ENCODE measurements at regions of chr10 and their contacts with region 1.

Region 1: DNA sequence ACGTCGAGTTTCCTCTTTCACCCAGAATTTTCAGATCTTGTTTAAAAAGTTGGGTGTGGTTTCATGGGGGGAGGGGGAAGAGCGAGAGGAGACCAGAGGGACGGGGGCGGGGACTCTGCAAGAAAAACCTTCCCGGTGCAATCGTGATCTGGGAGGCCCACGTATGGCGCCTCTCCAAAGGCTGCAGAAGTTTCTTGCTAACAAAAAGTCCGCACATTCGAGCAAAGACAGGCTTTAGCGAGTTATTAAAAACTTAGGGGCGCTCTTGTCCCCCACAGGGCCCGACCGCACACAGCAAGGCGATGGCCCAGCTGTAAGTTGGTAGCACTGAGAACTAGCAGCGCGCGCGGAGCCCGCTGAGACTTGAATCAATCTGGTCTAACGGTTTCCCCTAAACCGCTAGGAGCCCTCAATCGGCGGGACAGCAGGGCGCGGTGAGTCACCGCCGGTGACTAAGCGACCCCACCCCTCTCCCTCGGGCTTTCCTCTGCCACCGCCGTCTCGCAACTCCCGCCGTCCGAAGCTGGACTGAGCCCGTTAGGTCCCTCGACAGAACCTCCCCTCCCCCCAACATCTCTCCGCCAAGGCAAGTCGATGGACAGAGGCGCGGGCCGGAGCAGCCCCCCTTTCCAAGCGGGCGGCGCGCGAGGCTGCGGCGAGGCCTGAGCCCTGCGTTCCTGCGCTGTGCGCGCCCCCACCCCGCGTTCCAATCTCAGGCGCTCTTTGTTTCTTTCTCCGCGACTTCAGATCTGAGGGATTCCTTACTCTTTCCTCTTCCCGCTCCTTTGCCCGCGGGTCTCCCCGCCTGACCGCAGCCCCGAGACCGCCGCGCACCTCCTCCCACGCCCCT is at the start of gene VIM:
- DNase-seq: peak; percentile 95
- ATAC-seq: peak; percentile 46
- H3K4me3 Mint-ChIP-seq: peak within 1 kb of the TSS; percentile 94
- H3K27ac Mint-ChIP-seq: peak within 1 kb of the TSS; percentile 91
- H3K4me1 Mint-ChIP-seq: peaks cover 40% of the 10 kb centered on the region
- H3K27me3 Mint-ChIP-seq: no peaks in the 10 kb centered on the region
- CTCF ChIP-seq: no peak
- total RNA-seq, gene VIM: 590 to 602 TPM

Region 2: GRCh38 chr10:16891375-16892313 is 336.7 kb before region 1 on chr10:
- CTCF ChIA-PET with region 1: no interaction called
- POLR2A ChIA-PET with region 1: interaction called, 23 read pairs
- intact Hi-C with region 1: no loop called
- DNase-seq: peak; percentile 70
- ATAC-seq: peak; percentile 89
- H3K4me3 Mint-ChIP-seq: peak overlapping the region; percentile 54
- H3K27ac Mint-ChIP-seq: peak overlapping the region; percentile 48
- H3K4me1 Mint-ChIP-seq: peaks cover 10% of the 10 kb centered on the region
- H3K27me3 Mint-ChIP-seq: no peaks in the 10 kb centered on the region
- CTCF ChIP-seq: peak; percentile 36

Region 3: GRCh38 chr10:17023386-17024298 is 204.7 kb before region 1 on chr10:
- CTCF ChIA-PET with region 1: interaction called, 3 read pairs
- POLR2A ChIA-PET with region 1: interaction called, 41 read pairs
- intact Hi-C with region 1: loop called (anchors 1 kb)
- DNase-seq: peak; percentile 94
- ATAC-seq: peak; percentile 60
- H3K4me3 Mint-ChIP-seq: peak overlapping the region; percentile 50
- H3K27ac Mint-ChIP-seq: peak overlapping the region; percentile 97
- H3K4me1 Mint-ChIP-seq: peaks cover 62% of the 10 kb centered on the region
- H3K27me3 Mint-ChIP-seq: no peaks in the 10 kb centered on the region
- CTCF ChIP-seq: no peak

Region 4: DNA sequence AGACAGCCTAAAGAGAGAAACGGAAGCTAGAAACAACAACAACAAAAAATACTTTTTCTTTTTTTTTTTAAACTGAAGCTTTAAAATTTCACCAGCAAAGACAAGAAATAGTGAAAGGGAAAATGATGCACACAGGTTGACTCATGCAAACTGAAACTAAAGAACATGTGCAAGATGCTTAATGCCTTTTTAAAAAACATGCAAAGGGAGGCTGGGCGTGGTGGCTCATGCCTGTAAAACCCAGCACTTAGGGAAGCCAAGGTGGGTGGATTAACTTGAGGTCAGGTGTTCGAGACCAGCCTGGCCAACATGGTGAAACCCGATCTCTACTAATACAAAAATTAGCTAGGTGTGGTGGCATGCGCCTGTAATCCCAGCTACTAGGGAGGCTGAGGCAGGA is 83.6 kb before region 1 on chr10:
- CTCF ChIA-PET with region 1: interaction called, 10 read pairs
- POLR2A ChIA-PET with region 1: interaction called, 6 read pairs
- intact Hi-C with region 1: no loop called
- DNase-seq: peak; percentile 84
- ATAC-seq: peak; percentile 90
- H3K4me3 Mint-ChIP-seq: no peak overlapping the region
- H3K27ac Mint-ChIP-seq: peak overlapping the region; percentile 62
- H3K4me1 Mint-ChIP-seq: peaks cover 26% of the 10 kb centered on the region
- H3K27me3 Mint-ChIP-seq: no peaks in the 10 kb centered on the region
- CTCF ChIP-seq: no peak

Region 5: GRCh38 chr10:17206210-17206709 is 22.1 kb before region 1 on chr10:
- CTCF ChIA-PET with region 1: interaction called, 35 read pairs
- POLR2A ChIA-PET with region 1: interaction called, 35 read pairs
- intact Hi-C with region 1: loop called (anchors 1 kb)
- DNase-seq: peak; percentile 63
- ATAC-seq: peak; percentile 83
- H3K4me3 Mint-ChIP-seq: no peak overlapping the region
- H3K27ac Mint-ChIP-seq: peak overlapping the region; percentile 80
- H3K4me1 Mint-ChIP-seq: peaks cover 41% of the 10 kb centered on the region
- H3K27me3 Mint-ChIP-seq: no peaks in the 10 kb centered on the region
- CTCF ChIP-seq: no peak

Region 6: GRCh38 chr10:17643755-17644484 is 415.6 kb after region 1 on chr10 and contains the start of gene STAM:
- CTCF ChIA-PET with region 1: no interaction called
- POLR2A ChIA-PET with region 1: interaction called, 4 read pairs
- intact Hi-C with region 1: loop called (anchors 10 kb)
- DNase-seq: peak; percentile 96
- ATAC-seq: peak; percentile 79
- H3K4me3 Mint-ChIP-seq: peak within 1 kb of the TSS; percentile 90
- H3K27ac Mint-ChIP-seq: peak within 1 kb of the TSS; percentile 100
- H3K4me1 Mint-ChIP-seq: peaks cover 55% of the 10 kb centered on the region
- H3K27me3 Mint-ChIP-seq: no peaks in the 10 kb centered on the region
- CTCF ChIP-seq: no peak
- total RNA-seq, gene STAM: 21.6 to 24.5 TPM

Measured in activated CD8-positive, alpha-beta T cell treated with anti-CD3 and anti-CD28 coated beads for 36 hours (primary cell).